Heart right ventricle (tissue), 16 donors: ENCODE measurements at regions of chr5 and their contacts with region 1.

Region 1: GRCh38 chr5:144142139-144142823 is 28.2 kb downstream of the YIPF5 start:
- DNase-seq: no peak
- ATAC-seq: peak; percentile 22 to 71 (median 64)
- H3K4me3 ChIP-seq: no peak overlapping the region
- H3K27ac ChIP-seq: peak overlapping the region in 1 of 10 donors; percentile 12
- H3K4me1 ChIP-seq: peaks cover 2 to 43% (median 21%) of the 10 kb centered on the region in 9 donors
- H3K27me3 ChIP-seq: no peaks in the 10 kb centered on the region
- CTCF ChIP-seq: peak; percentile 28 to 77 (median 65)

Region 2: GRCh38 chr5:143557061-143557818 is 585.0 kb before region 1 on chr5:
- intact Hi-C with region 1: no loop called
- DNase-seq: no peak
- ATAC-seq: peak in 5 of 8 donors; percentile 44 to 73 (median 65)
- H3K4me3 ChIP-seq: no peak overlapping the region
- H3K27ac ChIP-seq: peak overlapping the region in 5 of 10 donors; percentile 22 to 58 (median 40)
- H3K4me1 ChIP-seq: peaks cover 3 to 36% (median 9%) of the 10 kb centered on the region in 9 donors
- H3K27me3 ChIP-seq: no peaks in the 10 kb centered on the region
- CTCF ChIP-seq: no peak

Region 3: GRCh38 chr5:143842920-143843319 is 299.4 kb before region 1 on chr5:
- intact Hi-C with region 1: loop called in 1 of 10 experiments (anchors 10 kb)
- DNase-seq: no peak
- ATAC-seq: no peak
- H3K4me3 ChIP-seq: no peak overlapping the region
- H3K27ac ChIP-seq: no peak overlapping the region
- H3K4me1 ChIP-seq: no peaks in the 10 kb centered on the region
- H3K27me3 ChIP-seq: no peaks in the 10 kb centered on the region
- CTCF ChIP-seq: no peak

Region 4: DNA sequence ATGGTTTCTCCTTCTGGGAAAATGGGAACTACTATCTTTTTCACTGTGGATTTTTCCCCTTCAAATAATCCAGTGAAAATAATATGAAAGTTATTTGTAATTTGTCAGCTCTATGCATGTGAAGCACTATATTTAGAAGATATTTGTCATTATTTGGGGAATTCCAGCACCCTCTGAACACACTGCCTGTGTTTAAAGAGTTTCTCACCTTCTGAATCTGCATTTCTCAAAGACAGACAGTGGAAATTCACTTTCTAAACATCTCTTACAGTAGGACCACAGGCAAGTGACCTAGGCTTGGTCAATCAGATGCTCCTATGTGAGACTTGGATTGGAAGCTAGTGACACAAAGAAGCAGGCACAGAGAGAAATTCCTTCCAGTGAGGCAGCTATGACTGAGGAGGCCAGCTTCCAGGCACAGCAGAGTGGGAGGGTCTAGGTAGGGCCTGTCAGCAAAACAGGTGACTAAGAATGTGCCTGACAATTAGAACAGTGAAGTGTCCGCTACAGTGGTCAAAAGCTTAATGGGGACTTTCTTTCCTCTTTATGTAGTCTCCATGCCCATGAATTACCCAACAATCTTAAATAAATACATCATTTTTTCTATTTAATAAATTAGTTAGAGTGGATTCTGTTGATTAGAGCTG is 163.1 kb before region 1 on chr5:
- intact Hi-C with region 1: no loop called
- DNase-seq: no peak
- ATAC-seq: no peak
- H3K4me3 ChIP-seq: no peak overlapping the region
- H3K27ac ChIP-seq: no peak overlapping the region
- H3K4me1 ChIP-seq: no peaks in the 10 kb centered on the region
- H3K27me3 ChIP-seq: no peaks in the 10 kb centered on the region
- CTCF ChIP-seq: no peak

Region 5: DNA sequence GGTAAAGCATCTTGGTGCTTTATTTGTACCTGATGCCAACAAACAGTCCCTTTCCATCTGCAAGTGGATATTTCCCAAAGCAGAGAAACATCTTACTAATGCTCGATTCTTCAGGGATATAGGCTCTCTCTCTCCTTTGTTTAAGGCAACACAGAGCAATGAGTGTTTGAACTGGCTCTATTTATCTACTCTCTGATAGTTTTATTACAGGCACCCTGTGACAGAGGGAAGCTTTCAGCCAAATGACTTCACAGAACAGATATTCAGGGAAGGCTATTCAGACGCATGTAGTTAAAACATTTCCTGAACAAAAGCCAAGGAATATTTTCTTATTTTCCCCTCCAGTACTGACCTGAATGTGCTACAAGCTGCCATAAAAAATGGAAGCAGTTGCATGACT is 113.6 kb before region 1 on chr5:
- intact Hi-C with region 1: loop called in 2 of 10 experiments (anchors 5 to 10 kb)
- DNase-seq: peak in 1 of 2 donors; percentile 27
- ATAC-seq: peak; percentile 59 to 95 (median 90)
- H3K4me3 ChIP-seq: peak overlapping the region in 6 of 10 donors; percentile 6 to 33 (median 15)
- H3K27ac ChIP-seq: peak overlapping the region in 9 of 10 donors; percentile 35 to 84 (median 76)
- H3K4me1 ChIP-seq: peaks cover 0 to 24% (median 11%) of the 10 kb centered on the region in 9 donors
- H3K27me3 ChIP-seq: no peaks in the 10 kb centered on the region
- CTCF ChIP-seq: no peak

Region 6: DNA sequence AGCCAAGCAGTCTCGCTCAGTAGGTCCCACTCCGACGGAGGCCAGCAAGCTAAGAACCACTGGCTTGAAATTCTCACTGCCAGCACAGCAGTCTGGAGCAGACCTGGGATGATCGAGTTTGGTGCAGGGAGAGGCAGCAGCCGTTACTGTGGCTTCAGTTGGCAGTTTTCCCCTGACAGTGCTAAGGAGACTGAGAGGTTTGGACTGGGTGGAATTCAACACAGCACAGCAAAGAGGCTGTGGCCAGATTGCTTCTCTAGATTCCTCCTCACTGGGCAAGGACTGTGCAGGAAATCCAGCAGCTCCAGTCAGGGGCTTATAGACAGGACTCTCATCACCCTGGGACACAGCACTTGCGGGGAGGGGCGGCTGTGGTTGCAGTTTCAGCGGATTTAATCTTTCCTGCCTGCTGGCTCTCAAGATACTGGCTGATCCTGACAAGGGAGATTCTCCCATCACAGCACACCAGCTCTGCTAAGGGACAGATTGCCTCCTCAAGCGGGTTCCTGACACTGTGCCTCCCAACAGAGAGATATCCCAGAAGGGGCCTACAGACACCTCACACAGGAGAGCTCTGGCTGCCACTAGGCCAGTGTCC is 93.9 kb before region 1 on chr5:
- intact Hi-C with region 1: no loop called
- DNase-seq: no peak
- ATAC-seq: peak in 2 of 8 donors; percentile 22 to 42
- H3K4me3 ChIP-seq: no peak overlapping the region
- H3K27ac ChIP-seq: no peak overlapping the region
- H3K4me1 ChIP-seq: peaks cover 0 to 4% (median 0%) of the 10 kb centered on the region in 9 donors
- H3K27me3 ChIP-seq: no peaks in the 10 kb centered on the region
- CTCF ChIP-seq: no peak